ENCODE measurements at regions of chr7 and their contacts with region 1.

Region 1: DNA sequence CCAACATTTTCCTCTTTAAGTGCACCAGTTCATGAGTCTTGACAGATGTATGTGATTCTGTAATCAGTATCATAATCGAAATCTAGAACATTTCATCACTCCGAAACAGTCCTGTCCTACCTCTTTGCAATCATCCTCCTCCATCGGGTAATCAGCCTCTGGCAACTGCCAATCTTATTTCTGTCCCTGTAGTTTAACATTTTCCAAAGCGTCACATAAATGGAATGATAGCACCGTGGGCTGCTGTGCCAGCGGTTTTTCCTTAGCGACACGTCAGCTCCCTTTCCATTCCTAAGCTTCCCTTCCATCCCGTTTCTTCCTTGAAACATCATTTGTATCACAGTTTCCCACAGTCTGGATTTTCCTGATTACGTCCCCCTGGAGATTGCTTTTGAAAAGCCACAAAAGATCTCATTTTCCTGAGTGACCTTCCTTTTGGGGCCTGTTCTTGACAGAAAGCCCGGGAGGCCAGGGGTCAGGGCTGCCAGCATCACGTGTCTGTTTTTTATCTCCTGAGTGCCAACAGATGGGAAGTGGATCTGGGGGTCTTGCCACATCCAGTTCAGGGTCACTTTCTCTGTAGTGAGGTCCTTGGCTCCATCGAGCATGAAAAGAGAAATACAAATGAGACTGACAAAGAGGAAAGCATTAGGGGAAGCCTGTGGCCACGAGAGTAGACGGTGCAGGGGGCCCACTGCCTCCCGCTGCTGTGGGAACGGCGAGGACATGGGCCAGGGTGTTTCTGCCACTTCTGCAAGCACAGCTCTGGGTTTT is 31.6 kb downstream of the TMEM120A start:
- DNase-seq: peak; percentile 63 to 88
- H3K4me3 ChIP-seq: no peak overlapping the region
- H3K27ac ChIP-seq: peak overlapping the region; percentile 88 to 95
- H3K4me1 ChIP-seq: peaks cover 12 to 65% (median 50%) of the 10 kb centered on the region in 4 donors
- H3K27me3 ChIP-seq: no peaks in the 10 kb centered on the region
- CTCF ChIP-seq: no peak

Region 2: GRCh38 chr7:75814407-75814947 is 148.3 kb before region 1 on chr7:
- intact Hi-C with region 1: no loop called
- DNase-seq: no peak
- H3K4me3 ChIP-seq: no peak overlapping the region
- H3K27ac ChIP-seq: no peak overlapping the region
- H3K4me1 ChIP-seq: no peaks in the 10 kb centered on the region
- H3K27me3 ChIP-seq: peaks cover 0 to 13% of the 10 kb centered on the region in 2 donors
- CTCF ChIP-seq: no peak

Region 3: DNA sequence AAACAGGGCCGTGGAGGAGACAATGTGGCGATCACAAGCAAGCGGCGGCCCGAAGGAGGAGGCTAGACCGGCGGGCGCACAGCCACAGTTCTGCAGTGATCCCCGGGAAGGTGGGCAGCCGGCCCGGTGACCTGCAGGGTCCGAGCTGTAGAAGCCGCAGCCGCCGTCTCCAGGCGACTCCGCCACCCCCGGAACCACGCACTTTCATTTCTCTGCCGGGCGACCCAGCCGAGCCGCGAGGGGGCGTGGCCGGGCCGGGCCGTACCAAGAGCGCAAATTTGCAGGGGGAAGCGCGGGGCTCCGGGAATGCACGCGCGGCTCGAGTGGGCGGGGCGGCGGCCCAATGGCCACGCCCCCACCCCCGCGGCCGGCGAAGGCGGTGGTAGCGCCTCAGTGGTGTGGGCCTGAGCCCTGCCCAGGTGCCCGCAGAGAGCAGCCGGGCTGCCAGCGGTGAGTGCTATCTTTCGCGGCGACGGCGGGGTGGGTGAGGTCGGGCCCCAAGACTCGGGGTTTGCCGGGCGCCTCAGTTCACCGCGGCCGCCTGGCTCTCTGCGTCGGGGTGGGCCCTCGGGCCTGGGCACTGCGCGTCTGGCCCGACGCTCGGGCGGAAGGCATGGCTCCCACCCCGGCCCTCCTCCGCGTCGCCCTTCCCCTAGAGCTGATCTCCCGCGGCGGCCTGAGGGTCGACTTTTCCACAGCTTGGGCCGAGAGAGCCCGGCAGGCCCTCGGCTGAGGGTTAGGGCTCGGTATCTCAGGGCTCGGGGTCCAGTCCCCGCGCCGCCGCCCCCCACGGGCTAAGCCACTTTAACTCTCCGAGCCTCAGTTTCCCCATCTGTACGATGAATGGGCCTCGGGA is 47.8 kb before region 1 on chr7 and contains the start of gene POR:
- intact Hi-C with region 1: loop called (anchors 5 kb)
- DNase-seq: peak; percentile 92 to 98
- H3K4me3 ChIP-seq: peak within 1 kb of the TSS; percentile 74 to 100
- H3K27ac ChIP-seq: peak within 1 kb of the TSS; percentile 84 to 95
- H3K4me1 ChIP-seq: peaks cover 0 to 39% (median 19%) of the 10 kb centered on the region in 4 donors
- H3K27me3 ChIP-seq: no peaks in the 10 kb centered on the region
- CTCF ChIP-seq: no peak

Region 4: DNA sequence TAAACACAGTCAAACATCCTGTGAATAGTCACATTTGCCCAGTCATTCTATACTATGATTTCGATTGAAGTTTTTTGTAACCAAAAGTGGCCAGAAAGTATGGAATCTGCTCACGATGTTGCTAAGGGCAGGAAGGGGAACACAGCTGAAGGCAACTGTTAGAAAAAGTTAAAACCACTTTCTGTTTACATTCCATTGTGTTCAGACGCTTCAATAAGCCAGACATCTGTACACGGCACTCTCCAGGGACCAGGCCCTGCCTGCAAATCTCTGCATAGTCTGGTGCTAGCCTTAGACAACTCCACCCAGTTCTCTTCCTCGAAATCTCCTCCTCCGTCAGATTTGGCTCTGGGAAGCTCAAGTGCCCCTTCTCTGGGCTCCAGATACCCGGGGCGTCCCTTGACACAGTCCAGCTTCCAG is 48.7 kb after region 1 on chr7:
- intact Hi-C with region 1: no loop called
- DNase-seq: peak in 1 of 2 donors; percentile 67
- H3K4me3 ChIP-seq: no peak overlapping the region
- H3K27ac ChIP-seq: peak overlapping the region; percentile 51 to 67
- H3K4me1 ChIP-seq: peaks cover 0 to 19% (median 3%) of the 10 kb centered on the region in 4 donors
- H3K27me3 ChIP-seq: no peaks in the 10 kb centered on the region
- CTCF ChIP-seq: no peak

Measured in tibial artery (tissue), 4 donors.